Activated CD4-positive, alpha-beta T cell treated with anti-CD3 and anti-CD28 coated beads for 36 hours (primary cell): ENCODE measurements at regions of chr3 and their contacts with region 1.

Region 1: GRCh38 chr3:67790043-67790442 is 135.6 kb upstream of the SUCLG2 start:
- DNase-seq: peak; percentile 74
- ATAC-seq: peak; percentile 89
- H3K4me3 Mint-ChIP-seq: no peak overlapping the region
- H3K27ac Mint-ChIP-seq: no peak overlapping the region
- H3K4me1 Mint-ChIP-seq: peaks cover 13% of the 10 kb centered on the region
- H3K27me3 Mint-ChIP-seq: no peaks in the 10 kb centered on the region

Region 2: GRCh38 chr3:67384760-67385397 is 405.2 kb before region 1 on chr3:
- CTCF ChIA-PET with region 1: interaction called, 18 read pairs
- POLR2A ChIA-PET with region 1: no interaction called
- intact Hi-C with region 1: loop called (anchors 1 to 2 kb)
- DNase-seq: peak; percentile 72
- ATAC-seq: peak; percentile 72
- H3K4me3 Mint-ChIP-seq: no peak overlapping the region
- H3K27ac Mint-ChIP-seq: no peak overlapping the region
- H3K4me1 Mint-ChIP-seq: peaks cover 35% of the 10 kb centered on the region
- H3K27me3 Mint-ChIP-seq: no peaks in the 10 kb centered on the region

Region 3: GRCh38 chr3:67593761-67594244 is 196.2 kb before region 1 on chr3:
- CTCF ChIA-PET with region 1: interaction called, 11 read pairs
- POLR2A ChIA-PET with region 1: no interaction called
- intact Hi-C with region 1: loop called in 1 of 2 experiments (anchors 1 kb)
- DNase-seq: peak; percentile 18
- ATAC-seq: no peak
- H3K4me3 Mint-ChIP-seq: no peak overlapping the region
- H3K27ac Mint-ChIP-seq: no peak overlapping the region
- H3K4me1 Mint-ChIP-seq: peaks cover 33% of the 10 kb centered on the region
- H3K27me3 Mint-ChIP-seq: no peaks in the 10 kb centered on the region

Region 4: GRCh38 chr3:67610458-67610857 is 179.6 kb before region 1 on chr3:
- CTCF ChIA-PET with region 1: no interaction called
- POLR2A ChIA-PET with region 1: no interaction called
- intact Hi-C with region 1: no loop called
- DNase-seq: no peak
- ATAC-seq: no peak
- H3K4me3 Mint-ChIP-seq: no peak overlapping the region
- H3K27ac Mint-ChIP-seq: no peak overlapping the region
- H3K4me1 Mint-ChIP-seq: peaks cover 24% of the 10 kb centered on the region
- H3K27me3 Mint-ChIP-seq: no peaks in the 10 kb centered on the region

Region 5: GRCh38 chr3:67745296-67745695 is 44.7 kb before region 1 on chr3:
- CTCF ChIA-PET with region 1: interaction called, 4 read pairs
- POLR2A ChIA-PET with region 1: interaction called, 10 read pairs
- intact Hi-C with region 1: no loop called
- DNase-seq: no peak
- ATAC-seq: no peak
- H3K4me3 Mint-ChIP-seq: no peak overlapping the region
- H3K27ac Mint-ChIP-seq: no peak overlapping the region
- H3K4me1 Mint-ChIP-seq: peaks cover 6% of the 10 kb centered on the region
- H3K27me3 Mint-ChIP-seq: no peaks in the 10 kb centered on the region